ENCODE measurements at regions of chr16 and their contacts with region 1.

Region 1: DNA sequence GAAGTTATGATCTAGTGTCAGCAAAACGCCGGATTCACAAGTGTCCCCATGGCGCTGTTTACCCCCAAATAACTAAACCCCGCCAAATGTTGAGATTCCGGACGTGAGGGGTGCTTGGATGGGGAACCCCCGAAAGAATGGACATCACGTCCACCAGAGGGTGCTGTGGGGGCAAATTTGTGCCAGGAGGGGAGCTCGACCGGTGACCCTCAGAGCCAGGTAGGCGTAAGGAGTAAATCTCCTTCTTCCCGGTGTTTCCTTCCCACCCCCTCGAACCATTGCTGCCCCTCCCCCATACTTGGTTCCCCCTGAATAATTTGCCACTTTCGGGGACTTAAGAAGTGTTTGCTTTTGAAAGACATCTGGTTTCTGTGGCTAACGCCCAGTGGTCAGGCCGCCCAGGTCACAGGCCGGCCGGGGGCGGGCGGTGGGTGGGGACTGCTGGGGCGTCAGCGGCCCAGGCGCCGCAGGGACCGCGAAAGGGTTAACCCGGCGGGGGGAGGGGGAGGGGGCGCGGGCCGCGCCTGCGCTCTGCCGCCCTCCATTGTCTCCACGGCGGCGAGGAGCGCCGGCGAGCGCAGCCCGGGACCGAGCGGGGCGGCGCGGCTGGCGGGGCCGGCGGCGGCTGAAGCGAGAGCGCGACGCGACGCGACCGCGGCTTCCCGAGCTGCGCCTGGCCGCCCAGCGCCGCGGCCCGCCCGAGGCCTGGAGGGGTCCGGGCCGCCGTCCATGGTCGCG is at the start of gene ZNRF1:
- DNase-seq: peak; percentile 90
- ATAC-seq: peak; percentile 88
- total RNA-seq, gene ZNRF1: 22.0 TPM

Region 2: DNA sequence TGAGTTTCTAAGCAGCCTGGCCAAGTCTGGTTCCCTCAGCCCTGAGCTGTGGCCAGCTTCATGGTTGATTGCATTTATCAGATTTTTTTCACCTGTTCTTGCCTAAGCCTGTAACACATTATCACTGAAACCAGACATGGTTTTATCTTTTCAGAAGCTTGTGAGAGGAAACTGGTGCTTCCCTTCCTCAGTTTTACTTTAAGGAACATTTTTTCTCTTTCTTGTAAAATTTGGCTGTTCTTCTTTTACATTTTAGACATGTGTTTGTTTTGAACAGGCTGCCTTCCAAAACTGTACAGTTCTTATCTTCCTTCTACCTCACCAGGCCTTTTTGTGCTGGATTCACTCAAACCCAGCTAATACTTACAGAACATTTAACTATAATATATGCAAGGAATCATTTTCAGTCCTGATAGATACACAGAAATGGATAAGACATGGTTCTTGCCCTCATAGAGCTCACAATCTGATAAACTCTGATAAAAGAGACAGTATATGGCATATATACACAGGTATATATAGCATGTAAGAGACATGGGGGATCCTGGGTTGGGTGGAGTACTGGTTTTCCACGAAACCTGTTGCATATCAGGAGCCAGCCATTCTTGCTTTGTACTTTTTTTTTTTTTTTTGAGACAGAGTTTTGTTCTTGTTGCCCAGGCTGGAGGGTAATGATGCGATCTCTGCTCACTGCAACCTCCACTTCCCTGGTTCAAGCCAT is 44.7 kb after region 1 on chr16:
- intact Hi-C with region 1: loop called (anchors 5 kb)
- DNase-seq: no peak
- ATAC-seq: no peak